ENCODE measurements at regions of chr2 and their contacts with region 1.

Region 1: DNA sequence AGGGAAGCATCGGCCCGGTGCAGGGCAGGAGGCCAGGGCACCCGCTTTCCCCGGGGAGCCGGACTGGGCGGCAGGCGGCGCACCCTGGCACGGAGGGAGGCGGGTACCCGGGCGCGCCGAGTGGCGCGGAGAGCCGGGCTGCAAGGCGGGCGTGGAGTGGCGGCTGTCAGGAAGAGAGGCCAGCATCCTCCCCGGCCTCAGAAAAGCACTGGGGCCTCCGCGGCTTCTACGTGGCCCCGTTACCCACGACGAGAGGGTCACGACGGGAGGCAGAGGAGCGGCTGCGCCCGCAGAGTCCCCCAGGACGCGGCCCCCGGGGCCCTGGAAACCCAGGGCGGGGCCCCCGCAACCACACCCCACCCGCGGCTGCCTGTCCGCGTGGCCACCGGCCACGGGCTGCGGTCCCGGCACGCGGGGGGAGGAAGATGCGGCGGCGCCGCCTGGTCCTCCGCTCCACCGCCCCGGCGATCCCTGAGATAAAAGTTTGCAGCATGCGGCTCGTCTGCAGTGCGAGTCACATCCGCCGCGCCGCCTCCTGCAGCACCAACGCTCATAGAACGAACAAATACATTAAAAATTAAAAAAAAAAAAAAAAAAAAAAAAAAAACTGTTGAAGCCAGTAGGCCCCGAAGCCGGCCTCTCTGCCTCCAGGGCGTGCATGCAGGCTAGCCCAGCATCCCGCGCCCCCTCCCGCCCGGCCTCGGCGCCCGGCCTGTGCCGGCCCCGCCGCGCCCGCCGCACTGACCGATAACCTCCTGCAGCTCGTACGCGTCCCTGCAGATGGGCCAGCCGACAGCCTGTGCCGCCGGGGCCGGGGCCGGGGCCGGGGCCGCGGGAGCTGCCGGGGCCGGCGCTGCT is 683 bp downstream of the STK39 start:
- DNase-seq: peak; percentile 62 to 88 (median 86)
- ATAC-seq: peak; percentile 78 to 86
- H3K4me3 ChIP-seq: peak overlapping the region; percentile 99
- H3K27ac ChIP-seq: peak overlapping the region; percentile 74
- H3K4me1 ChIP-seq: peaks cover 3% of the 10 kb centered on the region
- H3K27me3 ChIP-seq: no peaks in the 10 kb centered on the region

Region 2: DNA sequence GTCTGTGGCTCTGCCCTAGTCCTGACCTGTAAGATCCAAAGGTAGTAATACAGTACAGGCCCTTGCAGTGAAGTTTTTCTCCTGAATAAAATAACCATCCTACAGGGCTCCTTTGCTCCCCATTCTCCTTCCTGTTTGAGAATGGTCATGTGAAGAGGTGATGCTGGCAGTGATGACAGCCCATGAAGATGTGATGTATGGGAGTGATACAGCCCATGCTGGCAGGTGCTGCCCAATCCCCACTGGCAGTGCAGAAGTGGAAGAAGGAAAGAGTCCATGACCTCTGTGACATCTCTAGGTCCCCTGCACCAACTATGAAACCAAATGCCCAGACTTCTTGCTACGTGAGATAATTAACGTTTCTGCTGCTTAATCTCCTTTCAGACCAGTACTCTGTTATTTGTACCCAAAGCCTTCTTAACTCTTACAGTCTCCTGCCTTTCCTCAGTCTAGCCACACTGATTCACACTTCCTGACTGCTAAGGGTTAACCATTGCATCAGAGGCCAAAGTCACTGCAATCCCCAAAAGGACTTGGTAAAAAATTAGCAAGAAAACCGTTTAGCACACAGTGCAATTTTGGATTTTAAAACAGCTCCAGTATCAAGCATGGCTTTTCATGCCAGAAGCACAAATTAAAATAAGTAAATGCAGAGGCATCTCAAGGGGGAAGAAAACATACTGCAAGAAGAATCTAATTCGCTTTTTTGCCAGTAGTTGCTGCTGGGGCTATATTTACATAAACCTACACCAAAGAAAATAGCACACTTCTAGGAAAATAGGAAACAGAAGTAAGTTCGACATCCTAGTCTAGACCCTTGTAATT is 97.3 kb before region 1 on chr2:
- intact Hi-C with region 1: loop called in 1 of 4 experiments (anchors 10 kb)
- DNase-seq: no peak
- ATAC-seq: peak in 1 of 2 donors; percentile 27
- H3K4me3 ChIP-seq: no peak overlapping the region
- H3K27ac ChIP-seq: no peak overlapping the region
- H3K4me1 ChIP-seq: peaks cover 10% of the 10 kb centered on the region
- H3K27me3 ChIP-seq: no peaks in the 10 kb centered on the region

Measured in right cardiac atrium (tissue), 5 donors.